ENCODE measurements at regions of chr22 and their contacts with region 1.

Region 1: DNA sequence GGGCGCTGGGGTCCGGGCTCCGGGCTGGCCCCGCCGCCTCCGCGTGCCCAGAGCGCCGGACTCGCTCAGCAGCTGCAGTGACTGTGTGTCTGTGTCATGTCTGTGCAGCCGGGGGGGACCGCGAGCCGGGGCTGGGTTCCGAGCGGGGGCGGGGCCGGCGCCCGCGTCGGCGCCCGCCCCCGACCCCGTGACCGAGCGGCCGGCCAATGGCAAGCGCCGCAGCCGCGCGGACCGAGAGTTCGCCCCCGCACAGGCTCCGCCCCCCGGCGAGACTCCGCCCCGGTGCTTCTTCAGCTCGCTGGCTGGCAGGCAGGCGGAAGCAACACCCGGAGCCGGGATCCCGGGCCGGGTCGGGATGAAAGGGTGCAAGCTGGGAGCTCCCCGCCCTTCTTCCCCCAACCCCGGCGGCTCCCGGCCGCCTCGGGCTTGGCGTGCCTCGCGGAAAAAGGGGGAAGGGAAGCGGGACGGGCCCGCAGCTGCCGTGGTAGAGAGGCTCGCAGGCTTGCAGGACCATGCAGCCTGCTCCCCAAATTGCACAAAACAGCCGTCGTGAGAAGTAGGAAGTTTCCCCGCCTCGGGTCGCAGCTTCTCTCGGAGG is 750 bp upstream of the LARGE1 start:
- DNase-seq: peak; percentile 98
- ATAC-seq: peak; percentile 86
- H3K4me3 Mint-ChIP-seq: peak overlapping the region; percentile 91
- H3K27ac Mint-ChIP-seq: peak overlapping the region; percentile 50
- H3K4me1 Mint-ChIP-seq: peaks cover 47% of the 10 kb centered on the region
- H3K27me3 Mint-ChIP-seq: peaks cover 10% of the 10 kb centered on the region
- CTCF ChIP-seq: no peak

Region 2: DNA sequence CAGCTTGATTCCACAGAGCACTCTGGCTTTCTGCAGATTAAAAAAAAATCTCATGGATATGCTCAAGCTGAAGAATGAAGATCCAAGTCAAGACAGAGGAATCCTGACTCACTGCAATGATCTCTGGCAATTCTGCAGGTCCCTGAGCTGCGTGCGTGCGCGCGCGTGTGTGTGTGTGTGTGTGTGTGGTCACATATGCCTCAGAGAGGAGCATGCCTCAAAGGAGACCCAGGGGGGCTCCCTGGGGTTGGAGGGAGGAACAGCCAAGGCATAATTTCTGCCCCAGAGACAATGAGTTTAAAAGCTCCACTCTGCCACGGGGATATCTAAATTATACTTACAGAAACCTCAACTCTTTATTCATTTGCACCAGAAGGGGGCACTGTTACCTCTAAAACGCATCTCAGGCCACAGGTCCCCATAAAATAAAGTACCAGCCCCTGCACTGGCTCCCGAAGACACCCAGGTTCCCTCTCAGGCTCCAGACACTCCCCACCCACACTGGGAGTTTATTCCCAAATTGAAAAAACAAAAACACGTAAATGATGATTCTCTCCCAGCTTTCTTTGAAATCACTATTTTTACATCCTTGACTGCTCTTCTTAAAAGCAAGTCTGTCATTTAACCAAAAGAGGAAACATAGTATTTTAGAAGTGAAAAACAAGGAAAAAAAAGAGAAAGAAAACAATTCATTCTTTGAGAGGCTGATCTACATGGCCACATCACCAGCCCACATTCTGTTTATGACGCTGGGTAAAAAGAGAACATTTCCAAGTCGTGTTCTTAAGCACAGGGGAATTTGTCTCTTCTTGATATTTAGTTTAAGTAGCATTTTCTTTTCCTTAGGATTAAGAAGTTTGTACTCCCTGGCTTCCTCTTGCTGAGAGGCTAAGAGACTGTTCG is 401.7 kb before region 1 on chr22:
- CTCF ChIA-PET with region 1: interaction called, 43 read pairs
- POLR2A ChIA-PET with region 1: interaction called, 27 read pairs
- intact Hi-C with region 1: loop called (anchors 1 kb)
- DNase-seq: peak; percentile 22
- ATAC-seq: peak; percentile 51
- H3K4me3 Mint-ChIP-seq: peak overlapping the region; percentile 55
- H3K27ac Mint-ChIP-seq: peak overlapping the region; percentile 78
- H3K4me1 Mint-ChIP-seq: peaks cover 55% of the 10 kb centered on the region
- H3K27me3 Mint-ChIP-seq: no peaks in the 10 kb centered on the region
- CTCF ChIP-seq: no peak

Region 3: GRCh38 chr22:33666279-33666960 is 254.6 kb before region 1 on chr22:
- CTCF ChIA-PET with region 1: no interaction called
- POLR2A ChIA-PET with region 1: no interaction called
- intact Hi-C with region 1: loop called (anchors 10 kb)
- DNase-seq: no peak
- ATAC-seq: peak; percentile 70
- H3K4me3 Mint-ChIP-seq: peak overlapping the region; percentile 7
- H3K27ac Mint-ChIP-seq: no peak overlapping the region
- H3K4me1 Mint-ChIP-seq: peaks cover 57% of the 10 kb centered on the region
- H3K27me3 Mint-ChIP-seq: no peaks in the 10 kb centered on the region
- CTCF ChIP-seq: no peak

Region 4: GRCh38 chr22:33896575-33897447 is 24.2 kb before region 1 on chr22:
- CTCF ChIA-PET with region 1: interaction called, 6 read pairs
- POLR2A ChIA-PET with region 1: interaction called, 8 read pairs
- intact Hi-C with region 1: loop called (anchors 2 kb)
- DNase-seq: no peak
- ATAC-seq: peak; percentile 68
- H3K4me3 Mint-ChIP-seq: peak overlapping the region; percentile 50
- H3K27ac Mint-ChIP-seq: peak overlapping the region; percentile 84
- H3K4me1 Mint-ChIP-seq: peaks cover 66% of the 10 kb centered on the region
- H3K27me3 Mint-ChIP-seq: no peaks in the 10 kb centered on the region
- CTCF ChIP-seq: no peak

Region 5: DNA sequence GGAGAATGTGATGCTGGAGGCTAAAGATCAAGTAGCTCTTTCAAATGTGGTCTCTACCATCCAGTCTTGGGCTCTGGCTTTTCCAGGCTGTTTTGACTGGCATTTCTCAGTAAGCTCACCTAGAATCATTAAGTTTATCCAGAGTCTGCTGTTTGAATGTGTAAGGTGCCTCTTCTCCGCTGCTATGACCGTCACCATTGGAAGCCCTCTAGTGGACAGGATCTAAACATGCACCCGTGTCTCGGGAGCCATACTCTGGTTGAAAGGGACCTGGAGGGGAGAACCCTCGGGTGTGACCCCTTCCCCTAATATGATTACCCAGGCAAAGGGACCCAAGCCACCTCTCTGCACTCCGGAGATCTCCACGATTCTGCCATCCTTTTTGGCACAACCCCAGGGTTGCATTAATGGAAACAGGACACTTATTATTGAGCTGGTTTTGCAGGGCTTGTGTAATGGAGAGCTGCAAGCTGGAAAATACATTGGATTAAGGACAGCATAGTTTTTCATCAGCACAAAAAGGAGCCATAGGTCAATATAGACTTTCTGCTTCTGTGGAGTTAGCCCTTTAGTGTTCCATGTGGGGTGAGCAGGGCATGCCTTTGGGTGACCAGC is 190.3 kb after region 1 on chr22:
- CTCF ChIA-PET with region 1: interaction called, 39 read pairs
- POLR2A ChIA-PET with region 1: no interaction called
- intact Hi-C with region 1: loop called (anchors 1 kb)
- DNase-seq: peak; percentile 17
- ATAC-seq: peak; percentile 57
- H3K4me3 Mint-ChIP-seq: no peak overlapping the region
- H3K27ac Mint-ChIP-seq: no peak overlapping the region
- H3K4me1 Mint-ChIP-seq: no peaks in the 10 kb centered on the region
- H3K27me3 Mint-ChIP-seq: peaks cover 4% of the 10 kb centered on the region
- CTCF ChIP-seq: no peak

Region 6: GRCh38 chr22:35150183-35151107 is 1229.4 kb after region 1 on chr22:
- CTCF ChIA-PET with region 1: no interaction called
- POLR2A ChIA-PET with region 1: no interaction called
- intact Hi-C with region 1: loop called (anchors 5 kb)
- DNase-seq: peak; percentile 44
- ATAC-seq: peak; percentile 61
- H3K4me3 Mint-ChIP-seq: no peak overlapping the region
- H3K27ac Mint-ChIP-seq: no peak overlapping the region
- H3K4me1 Mint-ChIP-seq: peaks cover 3% of the 10 kb centered on the region
- H3K27me3 Mint-ChIP-seq: peaks cover 29% of the 10 kb centered on the region
- CTCF ChIP-seq: no peak